GM10248 (cell line): ENCODE measurements at regions of chr15 and their contacts with region 1.

Region 1: DNA sequence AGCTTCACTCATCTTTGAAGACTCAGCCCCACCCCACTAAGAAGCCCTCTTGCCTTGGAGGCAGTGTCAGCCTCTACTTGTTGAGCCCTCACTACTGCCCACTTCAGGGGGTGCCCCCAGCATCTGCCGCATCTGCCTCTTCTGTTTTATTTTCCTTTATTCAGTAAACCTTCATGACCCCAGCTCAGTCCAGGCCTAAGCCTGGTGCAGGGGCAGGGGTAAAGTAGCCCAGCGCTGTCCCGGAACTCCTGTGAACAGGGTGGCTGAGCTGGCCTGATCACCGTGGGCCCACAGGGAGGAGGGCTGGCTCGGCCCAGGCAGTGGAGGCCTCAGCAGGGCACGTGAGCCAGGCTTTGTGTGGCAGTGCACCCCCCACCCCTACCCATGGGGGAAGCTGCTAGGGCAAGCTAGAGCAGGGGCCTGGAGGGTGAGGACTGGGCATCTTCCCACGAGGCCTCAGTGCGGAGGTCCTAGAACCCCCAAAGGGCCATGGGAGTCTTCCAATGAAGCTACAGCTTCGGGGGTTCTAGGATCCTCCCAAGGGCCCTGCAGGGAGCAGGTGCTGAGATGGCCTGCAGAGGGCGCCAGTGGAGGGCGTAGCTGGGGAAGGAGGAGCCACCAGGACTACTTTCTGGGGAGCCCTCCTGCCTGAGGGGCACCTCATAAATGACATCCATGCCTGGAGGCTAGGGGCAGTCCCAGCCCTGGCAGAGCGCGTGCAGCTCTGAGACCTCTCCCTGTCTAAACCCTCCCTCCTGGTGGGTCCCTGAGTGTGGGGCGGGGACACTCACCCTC is 36.0 kb downstream of the TSPAN3 start:
- DNase-seq: no peak
- CTCF ChIP-seq: peak; percentile 69

Region 2: GRCh38 chr15:76941636-76942035 is 93.3 kb before region 1 on chr15:
- CTCF ChIA-PET with region 1: interaction called, 13 read pairs
- POLR2A ChIA-PET with region 1: no interaction called
- DNase-seq: no peak
- CTCF ChIP-seq: no peak

Region 3: DNA sequence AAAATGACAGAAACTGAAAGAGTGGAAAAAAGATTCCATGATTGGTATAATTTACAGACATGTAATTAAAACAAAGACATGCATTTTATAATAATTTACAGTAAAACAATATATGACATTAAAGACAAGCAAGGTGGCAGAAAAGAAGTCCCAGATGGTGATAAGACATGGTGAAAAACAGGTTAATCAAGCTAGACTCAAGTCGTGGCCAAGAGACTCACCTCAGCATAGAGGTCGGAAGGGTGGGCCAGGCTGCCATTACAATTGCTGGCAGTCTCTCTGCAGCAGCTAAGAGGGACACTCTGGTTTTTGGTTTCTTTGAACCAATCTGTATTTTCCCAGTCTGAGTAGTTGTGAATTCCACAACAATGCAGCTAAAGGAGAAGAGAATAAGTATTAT is 17.7 kb after region 1 on chr15:
- CTCF ChIA-PET with region 1: interaction called, 16 read pairs
- POLR2A ChIA-PET with region 1: no interaction called
- DNase-seq: no peak
- CTCF ChIP-seq: no peak